ENCODE measurements at regions of chr3 and their contacts with region 1.

Region 1: GRCh38 chr3:87350364-87351199 is 74.2 kb upstream of the POU1F1 start:
- DNase-seq: no peak
- H3K4me3 Mint-ChIP-seq: no peak overlapping the region
- H3K27ac Mint-ChIP-seq: no peak overlapping the region
- H3K4me1 Mint-ChIP-seq: no peaks in the 10 kb centered on the region
- H3K27me3 Mint-ChIP-seq: peaks cover 2% of the 10 kb centered on the region

Region 2: DNA sequence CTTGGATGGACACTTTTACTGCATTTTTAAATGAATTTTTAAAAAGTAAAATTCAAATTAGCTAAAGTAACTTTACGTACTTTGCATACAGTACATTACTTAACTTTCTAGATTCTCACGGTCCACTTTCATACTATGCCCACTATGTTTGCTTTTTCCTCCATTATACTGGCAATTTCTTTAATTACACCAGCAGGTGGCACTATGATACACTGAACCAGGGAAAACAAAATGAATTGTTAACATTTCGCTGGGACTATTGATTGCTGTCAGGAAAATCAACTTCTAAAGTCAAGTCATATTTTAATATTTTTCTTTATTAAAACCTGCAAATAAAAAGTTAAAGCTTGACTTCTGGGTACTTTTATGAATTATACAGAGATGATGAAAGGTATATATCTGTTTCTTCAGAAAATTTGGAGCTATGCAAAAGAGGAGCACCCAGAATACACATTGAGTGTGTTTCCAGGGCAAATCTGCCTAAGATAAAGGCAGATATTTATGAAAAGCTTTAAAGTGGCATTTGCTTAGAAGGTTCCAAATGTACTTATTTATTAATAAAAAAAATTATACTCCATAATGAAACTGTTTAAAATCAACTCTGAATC is 52.4 kb before region 1 on chr3:
- CTCF ChIA-PET with region 1: interaction called, 10 read pairs
- POLR2A ChIA-PET with region 1: no interaction called
- DNase-seq: no peak
- H3K4me3 Mint-ChIP-seq: no peak overlapping the region
- H3K27ac Mint-ChIP-seq: no peak overlapping the region
- H3K4me1 Mint-ChIP-seq: no peaks in the 10 kb centered on the region
- H3K27me3 Mint-ChIP-seq: peaks cover 1% of the 10 kb centered on the region

Region 3: DNA sequence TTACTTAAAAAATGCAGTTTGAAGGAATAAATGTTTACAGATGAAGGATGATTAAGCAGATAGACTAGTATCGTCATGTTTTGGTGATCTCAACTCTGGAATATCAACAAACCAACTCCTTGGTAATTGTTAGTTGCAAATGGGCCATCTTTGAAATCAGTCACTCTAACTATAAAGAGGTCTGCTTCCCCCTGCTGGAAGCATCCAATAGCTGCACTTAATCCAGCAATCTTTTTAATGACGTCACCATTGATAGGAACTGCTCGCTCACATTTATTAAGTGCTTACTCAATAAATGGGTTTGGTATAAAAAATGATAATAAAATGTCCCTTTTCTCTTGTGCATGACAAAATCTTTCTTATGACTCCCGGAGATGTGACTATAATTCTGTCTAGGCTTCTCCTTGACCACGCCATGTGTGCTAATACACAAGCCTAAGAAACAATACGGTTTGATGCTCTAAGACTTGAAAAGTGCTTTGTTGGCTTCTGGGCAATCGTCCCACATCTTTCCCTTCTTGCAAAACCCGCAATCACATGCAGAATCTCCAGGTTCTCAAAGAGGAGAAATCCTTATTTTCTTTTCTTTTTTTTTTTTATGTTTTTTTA is 153.4 kb after region 1 on chr3:
- CTCF ChIA-PET with region 1: interaction called, 11 read pairs
- POLR2A ChIA-PET with region 1: no interaction called
- DNase-seq: no peak
- H3K4me3 Mint-ChIP-seq: no peak overlapping the region
- H3K27ac Mint-ChIP-seq: no peak overlapping the region
- H3K4me1 Mint-ChIP-seq: no peaks in the 10 kb centered on the region
- H3K27me3 Mint-ChIP-seq: no peaks in the 10 kb centered on the region

Measured in activated CD4-positive, alpha-beta memory T cell treated with anti-CD3 and anti-CD28 coated beads, Interleukin-2, amount 10 ng/mL, durations not matched to agents 7 days and 5 days (primary cell).